GM13976 (cell line): ENCODE measurements at regions of chr11 and their contacts with region 1.

Region 1: DNA sequence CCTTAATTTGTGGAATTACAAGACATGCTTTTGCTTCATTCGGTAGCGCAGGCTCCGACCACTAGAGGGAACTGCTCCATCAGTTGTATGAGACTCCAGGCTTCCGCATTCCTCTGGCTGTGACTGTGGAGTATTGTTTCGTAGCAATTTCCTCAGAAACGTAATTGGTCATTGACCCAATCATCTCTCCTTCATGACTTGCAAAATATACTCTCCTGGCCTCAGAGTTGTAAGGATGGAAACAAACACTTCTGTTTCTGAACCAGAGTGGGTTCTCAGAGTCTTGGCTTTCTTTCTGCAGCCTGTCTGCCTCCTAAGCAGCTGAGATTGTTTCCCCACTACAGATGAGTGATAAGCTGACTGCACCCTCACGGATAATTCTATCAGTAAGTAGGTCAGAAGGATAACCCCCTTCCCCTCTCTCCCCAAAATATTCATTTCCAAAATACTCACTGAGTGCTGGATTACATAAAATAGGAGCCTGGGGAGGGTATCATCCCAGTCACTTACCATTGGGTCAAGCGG is 146.8 kb upstream of the ZC3H12C start:
- DNase-seq: peak; percentile 59
- CTCF ChIP-seq: peak; percentile 74

Region 2: DNA sequence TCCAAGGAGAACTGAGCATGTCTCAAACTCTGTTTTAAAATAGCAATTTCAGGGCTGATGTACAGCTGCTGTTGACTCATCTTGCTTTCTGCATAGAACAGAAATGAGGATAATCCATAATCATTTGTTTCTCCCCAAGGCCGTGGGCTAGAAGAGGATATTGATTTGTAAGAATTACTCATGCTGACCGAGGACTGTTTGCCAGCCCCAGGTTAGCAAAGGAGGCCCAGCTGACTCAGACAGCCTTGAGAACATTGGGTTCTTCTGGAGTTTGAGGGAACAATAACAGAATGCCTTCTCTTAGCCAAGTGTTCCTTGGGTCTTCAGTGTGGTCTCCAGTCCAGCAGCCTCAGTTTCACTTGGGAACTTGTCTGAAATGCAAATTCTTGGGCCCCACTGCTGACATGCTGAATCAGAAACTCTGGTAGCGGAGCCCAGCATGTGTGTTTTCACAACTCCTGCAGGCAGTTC is 238.8 kb after region 1 on chr11:
- in situ Hi-C with region 1: loop called (anchors 10 kb)
- DNase-seq: no peak
- CTCF ChIP-seq: no peak